Dendritic cell treated with granulocyte-macrophage colony-stimulating factor and Interleukin-4, amounts not matched to agents 40 ng/mL and 50 ng/mL, for 4 days (primary cell): ENCODE measurements at regions of chr2 and their contacts with region 1.

Region 1: GRCh38 chr2:26203906-26204305 is 31.0 kb downstream of the GAREM2 start:
- H3K4me3 Mint-ChIP-seq: no peak overlapping the region
- H3K27ac Mint-ChIP-seq: no peak overlapping the region
- H3K4me1 Mint-ChIP-seq: peaks cover 10% of the 10 kb centered on the region
- H3K27me3 Mint-ChIP-seq: no peaks in the 10 kb centered on the region

Region 2: GRCh38 chr2:25558262-25558661 is 645.6 kb before region 1 on chr2:
- intact Hi-C with region 1: no loop called
- H3K4me3 Mint-ChIP-seq: peak overlapping the region; percentile 68
- H3K27ac Mint-ChIP-seq: peak overlapping the region; percentile 96
- H3K4me1 Mint-ChIP-seq: peaks cover 64% of the 10 kb centered on the region
- H3K27me3 Mint-ChIP-seq: no peaks in the 10 kb centered on the region

Region 3: DNA sequence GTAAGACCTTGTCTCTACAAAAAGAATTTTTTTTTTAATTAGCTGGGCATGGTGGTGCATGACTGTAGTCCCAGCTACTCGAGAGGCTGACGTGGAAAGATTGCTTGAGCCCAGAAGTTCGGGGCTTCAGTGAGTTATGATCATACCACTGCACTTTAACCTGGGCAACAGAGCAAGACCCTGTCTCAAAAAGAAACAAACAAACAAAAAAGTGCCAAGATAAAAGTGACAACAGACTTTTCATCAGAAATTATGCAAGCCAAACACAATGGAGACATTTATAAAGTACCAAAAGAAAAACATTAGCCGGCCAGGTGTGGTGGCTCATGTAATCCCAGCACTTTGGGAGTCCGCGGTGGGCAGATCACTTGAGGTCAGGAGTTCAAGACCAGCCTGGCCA is 13.8 kb after region 1 on chr2:
- intact Hi-C with region 1: loop called (anchors 1 kb)
- H3K4me3 Mint-ChIP-seq: no peak overlapping the region
- H3K27ac Mint-ChIP-seq: no peak overlapping the region
- H3K4me1 Mint-ChIP-seq: peaks cover 7% of the 10 kb centered on the region
- H3K27me3 Mint-ChIP-seq: no peaks in the 10 kb centered on the region